ENCODE measurements at regions of chr6 and their contacts with region 1.

Region 1: DNA sequence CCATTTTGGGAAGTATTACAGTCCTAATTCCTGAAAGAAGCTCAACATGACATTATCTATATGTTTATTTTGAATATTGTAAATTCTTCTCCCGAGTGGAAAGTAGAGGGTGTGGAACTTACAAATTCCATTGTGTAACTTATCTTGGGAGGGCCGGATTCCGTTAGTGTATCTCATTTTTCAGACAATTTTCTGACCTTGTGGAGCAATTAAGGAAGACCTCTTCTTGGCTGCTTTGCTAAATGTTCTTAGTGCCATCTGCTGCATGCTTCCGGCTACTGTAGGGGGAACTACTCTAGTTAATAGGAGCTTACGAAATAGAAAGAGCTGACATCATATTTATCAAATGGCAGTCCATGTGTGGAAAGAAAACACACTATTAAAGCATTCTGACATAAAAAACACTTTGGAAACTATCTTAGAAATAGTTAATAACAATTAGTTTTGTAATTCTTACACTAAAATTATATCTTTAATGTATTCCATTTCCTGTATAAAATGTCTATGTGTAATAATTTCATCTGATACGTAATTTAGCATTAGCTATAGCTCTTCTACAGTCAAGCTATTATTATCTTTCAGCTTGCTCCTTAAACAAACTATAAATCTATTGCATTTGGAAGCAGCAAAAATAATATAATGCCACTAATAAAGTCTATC is 41.5 kb upstream of the KCNQ5 start:
- DNase-seq: peak; percentile 90
- H3K4me3 ChIP-seq: peak overlapping the region; percentile 6; the same call in 1 of the 2 replicates
- H3K27ac ChIP-seq: 0 out of 2 replicates have a peak overlapping the region, but pooled peaks have one; percentile 2
- H3K4me1 ChIP-seq: peaks cover 20% of the 10 kb centered on the region
- H3K27me3 ChIP-seq: no peaks in the 10 kb centered on the region

Region 2: DNA sequence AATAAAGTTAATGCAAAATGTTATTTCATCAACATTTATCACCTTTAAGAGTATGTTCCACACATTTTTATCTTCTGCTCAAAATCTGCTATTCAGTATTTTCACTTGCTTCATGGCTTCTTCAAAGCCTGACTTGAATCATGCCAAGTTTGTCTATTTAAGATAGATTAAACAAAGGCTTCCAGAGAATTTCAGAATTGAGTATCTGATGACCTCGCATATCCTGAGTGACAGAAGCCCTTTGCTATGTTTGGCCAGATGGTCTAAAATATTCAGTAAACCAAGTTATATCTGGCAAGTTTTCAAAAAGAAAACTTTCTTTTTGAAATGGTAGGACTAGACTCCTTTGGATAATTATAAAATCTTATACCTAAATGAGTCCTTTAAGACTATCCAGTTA is 307.5 kb before region 1 on chr6:
- in situ Hi-C with region 1: loop called (anchors 25 kb)
- DNase-seq: peak; percentile 4
- H3K4me3 ChIP-seq: no peak overlapping the region
- H3K27ac ChIP-seq: no peak overlapping the region
- H3K4me1 ChIP-seq: 0 out of 2 replicates have a peak, but pooled peaks cover 4% of the 10 kb centered on the region
- H3K27me3 ChIP-seq: peaks cover 10% of the 10 kb centered on the region; the same call in 1 of the 2 replicates

Region 3: DNA sequence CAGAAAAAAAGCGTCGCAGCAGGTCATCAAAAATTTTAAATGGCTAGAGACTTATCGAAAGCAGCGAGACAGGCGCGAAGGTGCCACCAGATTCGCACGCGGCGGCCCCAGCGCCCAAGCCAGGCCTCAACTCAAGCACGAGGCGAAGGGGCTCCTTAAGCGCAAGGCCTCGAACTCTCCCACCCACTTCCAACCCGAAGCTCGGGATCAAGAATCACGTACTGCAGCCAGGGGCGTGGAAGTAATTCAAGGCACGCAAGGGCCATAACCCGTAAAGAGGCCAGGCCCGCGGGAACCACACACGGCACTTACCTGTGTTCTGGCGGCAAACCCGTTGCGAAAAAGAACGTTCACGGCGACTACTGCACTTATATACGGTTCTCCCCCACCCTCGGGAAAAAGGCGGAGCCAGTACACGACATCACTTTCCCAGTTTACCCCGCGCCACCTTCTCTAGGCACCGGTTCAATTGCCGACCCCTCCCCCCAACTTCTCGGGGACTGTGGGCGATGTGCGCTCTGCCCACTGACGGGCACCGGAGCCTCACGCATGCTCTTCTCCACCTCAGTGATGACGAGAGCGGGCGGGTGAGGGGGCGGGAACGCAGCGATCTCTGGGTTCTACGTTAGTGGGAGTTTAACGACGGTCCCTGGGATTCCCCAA is 940.4 kb after region 1 on chr6 and contains the start of gene EEF1A1:
- in situ Hi-C with region 1: no loop called
- DNase-seq: peak; percentile 100
- H3K4me3 ChIP-seq: peak within 1 kb of the TSS; percentile 97
- H3K27ac ChIP-seq: peak within 1 kb of the TSS; percentile 100
- H3K4me1 ChIP-seq: peaks cover 45% of the 10 kb centered on the region
- H3K27me3 ChIP-seq: no peaks in the 10 kb centered on the region
- total RNA-seq, gene EEF1A1: 13,436 and 14,561 TPM in 2 replicates